ENCODE measurements at regions of chr17 and their contacts with region 1.

Region 1: GRCh38 chr17:21098934-21099689 is 27.7 kb upstream of the DHRS7B start:
- DNase-seq: peak; percentile 86

Region 2: GRCh38 chr17:21012736-21013135 is 86.4 kb before region 1 on chr17:
- CTCF ChIA-PET with region 1: no interaction called
- POLR2A ChIA-PET with region 1: no interaction called
- DNase-seq: no peak

Region 3: DNA sequence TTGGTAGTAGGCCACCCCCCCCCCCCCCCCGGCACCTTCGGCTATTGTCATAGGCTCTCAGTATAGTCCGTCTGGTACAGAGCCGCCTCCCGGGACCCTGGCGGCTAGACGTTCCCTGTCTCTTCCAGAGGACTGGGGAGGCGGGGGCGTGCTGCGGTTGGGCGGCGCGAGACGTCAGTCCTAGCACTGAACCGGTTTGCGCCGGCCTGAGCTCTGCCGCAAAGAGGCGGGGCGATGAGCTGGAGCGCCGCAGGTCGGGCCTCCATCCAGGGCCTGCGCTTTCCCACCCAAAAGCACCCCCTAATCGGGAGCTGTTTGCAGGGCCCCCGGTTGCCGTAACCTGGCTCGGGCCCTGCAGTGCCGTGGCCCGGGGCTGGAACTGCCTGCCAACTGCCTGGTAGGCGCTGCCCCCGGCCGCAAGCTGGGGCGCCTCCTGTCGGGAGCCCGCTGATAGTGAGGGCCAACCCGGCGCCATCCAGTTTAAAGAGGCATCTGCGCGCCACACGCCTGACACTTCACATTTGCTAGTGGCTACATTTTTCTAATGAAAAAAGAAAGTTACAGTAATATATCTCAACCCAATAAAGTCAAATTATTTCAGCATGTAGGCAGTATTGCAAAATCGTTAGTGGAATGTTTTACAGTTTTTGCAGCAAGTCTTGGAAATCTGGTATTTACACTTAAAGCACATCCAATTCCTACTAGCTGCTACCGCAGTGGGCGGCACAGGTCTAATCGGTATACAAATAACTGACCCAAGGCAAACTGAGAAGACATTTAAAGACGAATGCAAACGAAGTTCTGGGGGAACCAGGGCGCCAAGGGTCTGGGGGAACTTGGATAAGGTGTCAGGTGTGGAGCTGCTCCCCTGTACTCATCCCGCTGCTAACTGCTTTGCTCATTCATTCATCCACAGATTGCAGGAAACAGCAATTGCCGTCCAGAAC is 55.6 kb before region 1 on chr17:
- CTCF ChIA-PET with region 1: interaction called, 13 read pairs
- POLR2A ChIA-PET with region 1: interaction called, 59 read pairs
- DNase-seq: peak; percentile 70

Region 4: GRCh38 chr17:21058098-21058893 is 40.8 kb before region 1 on chr17:
- CTCF ChIA-PET with region 1: interaction called, 3 read pairs
- POLR2A ChIA-PET with region 1: interaction called, 18 read pairs
- DNase-seq: peak; percentile 24

Region 5: DNA sequence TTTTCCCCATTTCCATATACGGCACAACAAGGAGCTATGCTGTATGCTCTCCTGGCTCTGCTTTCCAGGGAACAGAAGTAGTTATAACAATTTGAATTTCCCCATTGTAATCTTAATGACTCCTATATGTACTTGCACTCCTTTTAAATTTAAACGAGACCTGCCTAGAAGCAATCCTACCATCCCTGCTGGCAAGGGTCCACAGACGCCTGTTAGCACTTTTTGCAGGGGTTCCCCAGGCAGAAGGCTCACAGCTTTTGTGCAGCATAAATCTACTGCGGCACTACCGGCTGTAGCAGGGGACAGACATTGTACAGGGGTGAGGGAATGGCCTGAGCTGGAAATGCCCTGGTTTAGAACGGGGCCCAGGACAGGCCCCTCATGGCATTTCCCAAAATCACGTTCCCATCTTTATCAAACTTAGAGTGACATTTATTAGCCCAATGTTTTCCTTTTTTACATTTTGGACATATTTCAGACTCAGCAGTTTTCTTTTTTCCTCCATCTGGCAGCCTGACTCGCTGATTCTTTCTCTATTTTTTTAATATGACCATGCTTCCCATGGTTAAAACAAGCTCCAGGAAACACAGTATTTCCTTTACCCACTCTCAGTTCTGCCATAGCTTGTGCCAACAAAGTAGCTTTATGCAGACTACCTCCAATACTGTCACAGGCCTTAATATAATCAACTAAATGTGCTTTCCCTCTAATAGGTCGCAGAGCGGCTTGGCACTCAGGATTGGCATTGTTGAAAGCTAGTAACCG is 20.9 kb before region 1 on chr17:
- CTCF ChIA-PET with region 1: no interaction called
- POLR2A ChIA-PET with region 1: interaction called, 14 read pairs
- DNase-seq: no peak

Region 6: DNA sequence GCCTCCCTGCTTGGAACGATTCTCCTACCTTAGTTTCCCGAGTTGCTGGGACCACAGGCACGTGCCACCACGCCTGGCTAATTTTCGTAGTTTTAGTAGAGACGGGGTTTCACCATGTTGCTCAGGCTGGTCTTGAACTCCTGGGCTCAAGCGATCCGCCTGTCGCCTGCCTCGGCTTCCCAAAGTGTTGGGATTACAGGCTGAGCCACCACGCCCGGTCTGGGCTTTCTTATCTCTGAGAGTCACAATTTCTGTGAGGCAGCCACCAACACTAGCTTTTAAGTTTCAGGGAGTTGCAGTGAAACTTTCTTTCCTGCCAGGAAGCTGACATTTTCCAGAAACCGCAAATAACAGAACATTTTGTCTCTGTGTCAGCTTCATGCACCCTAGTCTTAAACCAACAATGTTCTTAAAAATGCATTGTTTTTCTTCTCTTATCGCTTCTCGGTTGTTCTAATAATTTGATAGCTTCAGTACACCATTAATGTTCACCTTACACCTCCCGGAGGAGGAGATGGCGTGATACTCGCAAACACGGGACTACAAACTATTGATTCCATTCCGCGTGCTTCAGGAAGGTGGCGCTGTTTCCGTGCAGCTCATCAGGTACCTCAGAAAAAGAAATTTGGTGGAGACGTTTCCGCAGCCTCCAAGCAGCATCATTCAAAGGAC is 20.3 kb after region 1 on chr17:
- CTCF ChIA-PET with region 1: interaction called, 12 read pairs
- POLR2A ChIA-PET with region 1: interaction called, 14 read pairs
- DNase-seq: peak; percentile 76

Region 7: GRCh38 chr17:21275579-21276263 is 176.6 kb after region 1 on chr17:
- CTCF ChIA-PET with region 1: no interaction called
- POLR2A ChIA-PET with region 1: interaction called, 10 read pairs
- DNase-seq: peak; percentile 94

Measured in HEK293T (cell line).